Adrenal gland (tissue), 19 donors: ENCODE measurements at regions of chr22 and their contacts with region 1.

Region 1: GRCh38 chr22:42294034-42294985 is 23.9 kb upstream of the TCF20 start:
- DNase-seq: peak in 6 of 7 donors; percentile 45 to 66 (median 58)
- H3K4me3 ChIP-seq: no peak overlapping the region
- H3K27ac ChIP-seq: no peak overlapping the region
- H3K4me1 ChIP-seq: peaks cover 0 to 9% of the 10 kb centered on the region in 2 donors
- H3K27me3 ChIP-seq: no peaks in the 10 kb centered on the region
- CTCF ChIP-seq: no peak
- POLR2A ChIP-seq: no peak

Region 2: GRCh38 chr22:42160830-42161696 is 133.2 kb before region 1 on chr22:
- intact Hi-C with region 1: no loop called
- DNase-seq: no peak
- H3K4me3 ChIP-seq: no peak overlapping the region
- H3K27ac ChIP-seq: no peak overlapping the region
- H3K4me1 ChIP-seq: no peaks in the 10 kb centered on the region
- H3K27me3 ChIP-seq: no peaks in the 10 kb centered on the region
- CTCF ChIP-seq: no peak
- POLR2A ChIP-seq: no peak

Region 3: DNA sequence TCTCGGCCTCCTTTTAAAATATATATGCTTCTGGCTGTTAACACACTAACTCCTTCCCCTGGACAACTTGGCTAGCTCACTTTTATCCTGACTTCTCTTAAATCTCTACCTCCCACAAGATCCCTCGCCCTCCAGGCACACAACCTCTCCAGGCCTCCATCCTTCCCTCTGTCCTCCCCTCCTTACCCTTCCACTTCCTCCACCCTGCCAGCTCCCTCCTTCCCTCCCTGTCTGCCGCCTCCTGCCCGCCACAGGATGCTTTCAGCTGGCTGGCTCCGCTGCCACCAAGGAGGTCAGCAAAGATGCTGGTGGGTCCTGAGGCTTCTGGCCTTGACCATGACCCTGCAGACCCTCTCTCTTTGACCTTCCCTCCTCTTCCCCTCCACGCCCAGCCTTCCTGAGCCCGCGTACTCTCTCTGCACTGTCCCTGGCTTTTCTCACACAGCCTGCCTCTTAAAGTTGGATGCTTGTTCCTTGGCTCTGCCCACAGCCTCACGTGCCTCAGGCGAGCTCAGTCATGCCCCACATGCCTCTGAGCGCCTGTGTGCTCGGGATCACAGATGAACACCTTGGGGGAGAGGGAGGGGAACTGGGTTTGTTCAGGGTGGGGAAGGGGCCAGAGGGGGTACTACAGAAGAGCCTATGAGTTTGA is 131.2 kb after region 1 on chr22:
- intact Hi-C with region 1: loop called in 1 of 2 experiments (anchors 10 kb)
- DNase-seq: no peak
- H3K4me3 ChIP-seq: no peak overlapping the region
- H3K27ac ChIP-seq: no peak overlapping the region
- H3K4me1 ChIP-seq: no peaks in the 10 kb centered on the region
- H3K27me3 ChIP-seq: no peaks in the 10 kb centered on the region
- CTCF ChIP-seq: no peak
- POLR2A ChIP-seq: no peak